Gastrocnemius medialis (tissue), 4 donors: ENCODE measurements at regions of chr6 and their contacts with region 1.

Region 1: GRCh38 chr6:137933696-137934095 is 66.6 kb downstream of the TNFAIP3 start:
- DNase-seq: peak; percentile 71 to 85
- ATAC-seq: peak; percentile 98
- H3K4me3 ChIP-seq: no peak overlapping the region
- H3K27ac ChIP-seq: peak overlapping the region; percentile 68 to 78 (median 76)
- H3K4me1 ChIP-seq: peaks cover 3 to 13% of the 10 kb centered on the region in 2 donors
- H3K27me3 ChIP-seq: no peaks in the 10 kb centered on the region
- CTCF ChIP-seq: no peak
- POLR2A ChIP-seq: no peak

Region 2: GRCh38 chr6:137776786-137777686 is 156.7 kb before region 1 on chr6:
- in situ Hi-C with region 1: no loop called
- intact Hi-C with region 1: no loop called
- DNase-seq: no peak
- ATAC-seq: no peak
- H3K4me3 ChIP-seq: no peak overlapping the region
- H3K27ac ChIP-seq: no peak overlapping the region
- H3K4me1 ChIP-seq: peaks cover 0 to 5% of the 10 kb centered on the region in 2 donors
- H3K27me3 ChIP-seq: no peaks in the 10 kb centered on the region
- CTCF ChIP-seq: no peak
- POLR2A ChIP-seq: no peak

Region 3: GRCh38 chr6:137873273-137873762 is 60.4 kb before region 1 on chr6:
- in situ Hi-C with region 1: no loop called
- intact Hi-C with region 1: loop called (anchors 5 kb)
- DNase-seq: peak; percentile 69 to 81
- ATAC-seq: peak; percentile 93
- H3K4me3 ChIP-seq: peak overlapping the region in 2 of 4 donors; percentile 7 to 19
- H3K27ac ChIP-seq: peak overlapping the region; percentile 13 to 65 (median 35)
- H3K4me1 ChIP-seq: peaks cover 27 to 48% of the 10 kb centered on the region in 2 donors
- H3K27me3 ChIP-seq: no peaks in the 10 kb centered on the region
- CTCF ChIP-seq: no peak
- POLR2A ChIP-seq: peak in 1 of 2 donors; percentile 34